HEK293 (cell line): ENCODE measurements at regions of chr19 and their contacts with region 1.

Region 1: GRCh38 chr19:33430674-33431277 is 57.3 kb downstream of the CEBPG start:
- H3K4me3 ChIP-seq: no peak overlapping the region
- H3K27ac ChIP-seq: no peak overlapping the region
- H3K4me1 ChIP-seq: peaks cover 17% of the 10 kb centered on the region
- CTCF ChIP-seq: peak; percentile 98

Region 2: GRCh38 chr19:33325920-33326319 is 104.9 kb before region 1 on chr19:
- CTCF ChIA-PET with region 1: no interaction called
- POLR2A ChIA-PET with region 1: no interaction called
- H3K4me3 ChIP-seq: no peak overlapping the region
- H3K27ac ChIP-seq: no peak overlapping the region
- H3K4me1 ChIP-seq: no peaks in the 10 kb centered on the region
- CTCF ChIP-seq: no peak

Region 3: GRCh38 chr19:33406521-33407139 is 24.1 kb before region 1 on chr19:
- CTCF ChIA-PET with region 1: interaction called, 22 read pairs
- POLR2A ChIA-PET with region 1: no interaction called
- H3K4me3 ChIP-seq: no peak overlapping the region
- H3K27ac ChIP-seq: no peak overlapping the region
- H3K4me1 ChIP-seq: no peaks in the 10 kb centered on the region
- CTCF ChIP-seq: peak; percentile 99

Region 4: GRCh38 chr19:33441277-33441699 is 10.5 kb after region 1 on chr19:
- CTCF ChIA-PET with region 1: interaction called, 21 read pairs
- POLR2A ChIA-PET with region 1: no interaction called
- H3K4me3 ChIP-seq: no peak overlapping the region
- H3K27ac ChIP-seq: no peak overlapping the region
- H3K4me1 ChIP-seq: peaks cover 21% of the 10 kb centered on the region
- CTCF ChIP-seq: no peak

Region 5: GRCh38 chr19:33453265-33453664 is 22.5 kb after region 1 on chr19:
- CTCF ChIA-PET with region 1: interaction called, 21 read pairs
- POLR2A ChIA-PET with region 1: no interaction called
- H3K4me3 ChIP-seq: no peak overlapping the region
- H3K27ac ChIP-seq: no peak overlapping the region
- H3K4me1 ChIP-seq: no peaks in the 10 kb centered on the region
- CTCF ChIP-seq: no peak

Region 6: GRCh38 chr19:33541834-33542472 is 111.2 kb after region 1 on chr19:
- CTCF ChIA-PET with region 1: interaction called, 12 read pairs
- POLR2A ChIA-PET with region 1: no interaction called
- H3K4me3 ChIP-seq: no peak overlapping the region
- H3K27ac ChIP-seq: no peak overlapping the region
- H3K4me1 ChIP-seq: no peaks in the 10 kb centered on the region
- CTCF ChIP-seq: no peak

Region 7: GRCh38 chr19:33740811-33741396 is 310.1 kb after region 1 on chr19:
- CTCF ChIA-PET with region 1: interaction called, 15 read pairs
- POLR2A ChIA-PET with region 1: no interaction called
- H3K4me3 ChIP-seq: no peak overlapping the region
- H3K27ac ChIP-seq: no peak overlapping the region
- H3K4me1 ChIP-seq: no peaks in the 10 kb centered on the region
- CTCF ChIP-seq: no peak

Region 8: DNA sequence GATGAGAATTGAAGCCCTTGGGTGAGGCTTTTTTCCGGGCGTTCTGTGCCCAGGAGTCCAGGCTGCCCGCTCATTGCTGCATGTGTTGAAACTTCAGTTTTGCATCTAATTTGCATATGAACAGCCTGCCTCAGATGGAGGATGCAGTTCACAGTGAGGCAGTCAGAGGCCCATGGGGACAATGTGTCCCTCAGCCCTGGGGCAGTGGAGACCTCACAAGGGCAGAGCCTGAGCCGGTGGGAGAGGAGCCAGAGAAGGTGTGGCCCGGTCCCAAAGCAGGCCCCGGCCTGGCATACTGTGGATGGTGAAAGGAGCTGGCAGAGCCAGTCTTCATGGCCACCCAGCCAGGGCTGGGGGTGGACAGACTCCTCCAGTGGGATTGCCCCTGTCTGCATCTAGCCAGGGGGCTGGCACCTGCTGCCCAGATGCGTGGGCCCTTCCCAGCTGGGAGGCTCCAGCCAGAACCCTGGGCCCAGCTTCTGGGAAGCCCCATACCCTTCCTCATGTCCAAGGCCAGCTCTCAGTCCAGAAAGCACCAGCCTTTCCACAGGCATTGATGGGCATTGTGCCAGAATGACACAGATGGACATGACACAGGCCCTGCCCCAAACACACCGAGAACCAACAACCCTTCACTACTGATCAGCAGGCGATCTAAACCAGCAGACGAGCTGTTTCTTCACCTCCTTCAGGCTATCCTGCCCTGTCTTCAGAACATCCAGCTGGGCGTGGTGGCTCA is 333.0 kb after region 1 on chr19:
- CTCF ChIA-PET with region 1: interaction called, 173 read pairs
- POLR2A ChIA-PET with region 1: interaction called, 4 read pairs
- H3K4me3 ChIP-seq: no peak overlapping the region
- H3K27ac ChIP-seq: no peak overlapping the region
- H3K4me1 ChIP-seq: no peaks in the 10 kb centered on the region
- CTCF ChIP-seq: no peak